Heart left ventricle (tissue), 16 donors: ENCODE measurements at regions of chr3 and their contacts with region 1.

Region 1: GRCh38 chr3:177294221-177294620 is 96.9 kb upstream of the TBL1XR1 start:
- DNase-seq: peak in 4 of 5 donors; percentile 75 to 85 (median 78)
- ATAC-seq: peak; percentile 96 to 97 (median 97)
- H3K4me3 ChIP-seq: no peak overlapping the region
- H3K27ac ChIP-seq: peak overlapping the region; percentile 49 to 90 (median 80)
- H3K4me1 ChIP-seq: peaks cover 0 to 28% (median 9%) of the 10 kb centered on the region in 12 donors
- H3K27me3 ChIP-seq: no peaks in the 10 kb centered on the region
- CTCF ChIP-seq: no peak
- POLR2A ChIP-seq: no peak

Region 2: GRCh38 chr3:177251755-177252154 is 42.5 kb before region 1 on chr3:
- intact Hi-C with region 1: no loop called
- DNase-seq: no peak
- ATAC-seq: no peak
- H3K4me3 ChIP-seq: no peak overlapping the region
- H3K27ac ChIP-seq: no peak overlapping the region
- H3K4me1 ChIP-seq: peaks cover 0 to 8% (median 0%) of the 10 kb centered on the region in 12 donors
- H3K27me3 ChIP-seq: no peaks in the 10 kb centered on the region
- CTCF ChIP-seq: no peak
- POLR2A ChIP-seq: no peak

Region 3: DNA sequence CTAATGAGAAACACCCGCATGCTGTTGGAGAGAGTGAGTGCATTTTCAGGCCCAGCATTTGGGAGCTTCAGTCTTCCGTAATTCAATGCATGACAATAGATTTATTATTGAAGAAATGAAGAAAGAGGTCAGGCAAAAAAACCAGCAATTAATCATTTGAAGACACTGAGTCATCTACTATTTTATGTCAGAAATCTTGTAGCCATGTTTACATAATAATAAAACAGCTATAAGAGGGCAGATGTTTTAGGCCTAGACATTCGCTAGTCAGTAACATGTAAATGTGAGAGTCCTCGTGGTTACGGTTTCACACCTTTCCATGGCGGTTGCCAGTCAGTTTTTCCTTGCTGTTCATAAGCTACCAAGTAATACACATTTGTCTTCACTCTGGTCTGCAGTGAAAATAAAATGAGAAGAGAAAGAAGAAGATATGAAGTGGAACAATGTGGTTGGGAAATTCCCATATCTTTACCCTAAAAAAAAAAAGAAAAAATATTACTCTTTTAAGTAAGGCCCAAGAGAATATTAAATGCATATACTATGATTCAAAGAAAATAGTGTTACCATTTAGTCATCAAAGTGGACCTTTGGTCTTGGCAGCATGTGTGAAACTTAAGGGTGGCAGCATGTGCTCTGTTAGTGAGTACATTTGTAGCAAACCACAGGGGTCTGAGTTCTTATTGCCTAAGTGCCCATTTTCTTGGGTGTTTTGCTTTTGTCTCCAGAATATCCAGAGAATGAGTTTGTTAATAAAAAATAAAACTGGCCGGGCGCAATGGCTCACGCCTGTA is 43.5 kb after region 1 on chr3:
- intact Hi-C with region 1: loop called in 7 of 10 experiments (anchors 5 kb)
- DNase-seq: no peak
- ATAC-seq: no peak
- H3K4me3 ChIP-seq: no peak overlapping the region
- H3K27ac ChIP-seq: peak overlapping the region in 6 of 12 donors; percentile 76 to 87 (median 83)
- H3K4me1 ChIP-seq: peaks cover 3 to 81% (median 52%) of the 10 kb centered on the region in 12 donors
- H3K27me3 ChIP-seq: no peaks in the 10 kb centered on the region
- CTCF ChIP-seq: no peak
- POLR2A ChIP-seq: no peak

Region 4: DNA sequence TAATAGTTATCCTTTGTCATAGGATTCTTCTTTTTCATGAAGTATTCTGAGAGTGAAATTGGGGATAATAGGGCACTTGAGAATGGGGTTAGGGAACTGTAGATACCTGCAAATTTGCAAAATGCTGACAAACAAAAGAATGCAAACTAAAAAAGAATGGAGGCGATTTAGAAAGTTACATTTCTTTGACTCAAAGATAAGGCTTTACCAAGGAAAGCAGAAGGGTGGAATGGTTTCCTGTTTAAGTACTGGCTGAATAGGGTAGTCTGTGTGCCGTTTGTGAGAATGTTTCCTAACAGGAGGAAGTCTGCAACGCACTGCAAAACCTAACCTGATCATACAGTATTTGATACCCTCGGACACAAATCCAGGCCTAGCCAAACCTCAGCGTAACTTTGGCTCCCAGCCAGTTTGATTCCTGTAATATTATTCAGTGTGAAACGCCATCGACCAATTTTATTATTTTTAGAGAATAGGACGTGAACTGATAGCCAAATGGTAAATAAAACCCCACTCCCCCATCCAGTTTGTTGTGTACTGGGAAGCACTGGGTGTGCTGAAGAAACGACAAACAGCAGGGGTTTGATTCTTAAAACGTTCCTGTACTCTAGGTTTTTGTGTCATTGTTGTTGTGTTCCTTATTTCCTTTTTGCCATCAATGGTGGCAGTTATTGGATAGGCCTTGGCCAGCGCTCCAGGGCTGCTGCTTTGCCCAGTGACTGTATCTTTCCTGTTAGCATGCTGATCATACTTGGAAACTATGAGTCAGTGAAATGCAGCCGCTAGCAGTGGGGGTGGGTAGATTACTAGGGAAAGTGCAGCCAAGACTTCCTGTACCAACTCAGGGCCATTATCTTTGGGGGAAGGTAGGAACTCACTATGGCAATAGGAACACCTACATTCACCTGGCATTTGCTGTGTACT is 51.1 kb after region 1 on chr3:
- intact Hi-C with region 1: loop called in 3 of 10 experiments (anchors 5 to 10 kb)
- DNase-seq: peak; percentile 88 to 94 (median 88)
- ATAC-seq: peak; percentile 97 to 99 (median 98)
- H3K4me3 ChIP-seq: peak overlapping the region in 1 of 12 donors; percentile 9
- H3K27ac ChIP-seq: peak overlapping the region; percentile 79 to 98 (median 92)
- H3K4me1 ChIP-seq: peaks cover 16 to 68% (median 47%) of the 10 kb centered on the region in 12 donors
- H3K27me3 ChIP-seq: no peaks in the 10 kb centered on the region
- CTCF ChIP-seq: no peak
- POLR2A ChIP-seq: no peak

Region 5: DNA sequence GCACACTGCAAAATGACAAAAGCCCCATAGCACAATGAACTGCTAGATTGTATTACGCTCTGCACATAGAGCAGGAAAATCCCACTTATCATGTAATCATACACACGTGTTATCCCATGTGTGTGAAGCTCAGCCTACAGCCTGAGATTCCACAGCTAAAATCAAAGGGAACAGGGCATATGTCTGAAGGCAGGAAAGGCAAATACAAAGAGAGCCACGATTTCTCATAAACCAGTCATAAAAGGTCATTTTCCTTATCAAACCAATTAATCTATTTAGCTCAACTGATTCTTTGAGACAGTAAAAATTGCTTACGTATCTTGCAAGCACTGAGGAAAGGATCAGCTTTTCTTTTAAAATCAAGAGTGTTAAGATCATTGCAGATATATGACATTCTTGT is 102.5 kb after region 1 on chr3:
- intact Hi-C with region 1: no loop called
- DNase-seq: no peak
- ATAC-seq: no peak
- H3K4me3 ChIP-seq: no peak overlapping the region
- H3K27ac ChIP-seq: no peak overlapping the region
- H3K4me1 ChIP-seq: no peaks in the 10 kb centered on the region
- H3K27me3 ChIP-seq: no peaks in the 10 kb centered on the region
- CTCF ChIP-seq: no peak
- POLR2A ChIP-seq: no peak